ENCODE measurements at regions of chr2 and their contacts with region 1.

Region 1: DNA sequence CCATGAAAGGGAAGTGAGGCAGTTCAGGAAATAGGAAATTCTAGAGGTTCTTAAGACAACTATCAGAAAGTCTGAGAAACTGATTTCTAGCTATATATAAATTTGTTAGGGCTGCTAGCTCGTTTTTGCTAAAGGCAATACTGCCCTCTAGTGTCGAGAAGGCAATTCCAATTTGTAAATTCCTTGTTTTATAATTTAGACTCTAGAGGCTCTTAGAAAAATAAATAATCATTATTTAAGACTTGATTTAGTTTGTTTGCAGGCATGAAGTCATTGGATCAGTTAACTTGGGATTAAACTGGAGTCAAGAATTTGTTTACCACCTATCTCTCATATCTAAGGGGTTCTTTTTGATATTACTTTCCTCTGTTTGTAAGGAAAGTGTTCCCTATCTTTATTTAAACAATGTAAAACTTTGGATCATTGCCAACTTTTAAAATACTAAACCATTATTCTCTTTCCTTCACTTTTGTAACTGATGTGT is 66.2 kb downstream of the ACVR2A start:
- DNase-seq: peak in 1 of 2 experiments; percentile 58
- H3K4me3 ChIP-seq: no peak overlapping the region
- H3K4me3 Mint-ChIP-seq: no peak overlapping the region
- H3K27ac Mint-ChIP-seq: no peak overlapping the region
- H3K4me1 ChIP-seq: no peaks in the 10 kb centered on the region
- H3K4me1 Mint-ChIP-seq: no peaks in the 10 kb centered on the region
- H3K27me3 ChIP-seq: no peaks in the 10 kb centered on the region
- H3K27me3 Mint-ChIP-seq: no peaks in the 10 kb centered on the region
- CTCF ChIP-seq: peak; percentile 61 to 80

Region 2: DNA sequence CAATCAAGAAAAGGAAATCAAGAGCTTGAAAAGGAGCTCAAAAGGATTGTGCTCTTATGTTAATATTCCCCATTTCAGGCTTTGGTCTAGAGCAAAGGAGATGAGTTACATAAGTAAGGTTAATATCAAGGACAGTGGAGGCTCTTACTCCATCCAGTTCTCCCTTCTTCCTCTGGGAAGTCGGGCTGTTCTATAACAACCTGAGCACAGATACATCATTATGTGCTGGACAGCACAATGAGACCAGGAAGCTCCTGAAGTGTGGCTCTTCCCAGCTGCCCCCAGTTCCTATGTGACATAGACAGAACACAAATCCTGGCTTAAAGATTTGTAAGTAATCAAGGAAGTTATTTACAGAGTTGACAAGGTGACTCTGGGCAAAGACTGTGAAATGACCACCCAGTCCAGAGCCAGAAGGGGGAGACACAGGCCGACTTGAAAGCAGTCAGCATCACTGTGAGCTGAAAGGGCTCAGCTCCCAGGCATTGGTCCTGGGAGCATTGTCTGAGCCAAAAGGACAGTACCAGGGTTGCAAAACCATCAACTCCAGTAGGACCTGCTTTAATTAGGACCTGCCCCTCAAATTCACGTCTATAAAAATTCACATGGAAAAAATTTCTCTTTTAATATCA is 983.8 kb before region 1 on chr2:
- CTCF ChIA-PET with region 1: interaction called, 11 read pairs
- POLR2A ChIA-PET with region 1: no interaction called
- intact Hi-C with region 1: loop called (anchors 1 kb)
- DNase-seq: peak; percentile 59 to 66
- H3K4me3 ChIP-seq: no peak overlapping the region
- H3K4me3 Mint-ChIP-seq: no peak overlapping the region
- H3K27ac Mint-ChIP-seq: no peak overlapping the region
- H3K4me1 ChIP-seq: no peaks in the 10 kb centered on the region
- H3K4me1 Mint-ChIP-seq: no peaks in the 10 kb centered on the region
- H3K27me3 ChIP-seq: no peaks in the 10 kb centered on the region
- H3K27me3 Mint-ChIP-seq: no peaks in the 10 kb centered on the region
- CTCF ChIP-seq: peak; percentile 67 to 72

Region 3: GRCh38 chr2:147082850-147083522 is 828.0 kb before region 1 on chr2:
- CTCF ChIA-PET with region 1: interaction called, 12 read pairs
- POLR2A ChIA-PET with region 1: no interaction called
- intact Hi-C with region 1: loop called (anchors 1 kb)
- DNase-seq: peak; percentile 65 to 80
- H3K4me3 ChIP-seq: no peak overlapping the region
- H3K4me3 Mint-ChIP-seq: no peak overlapping the region
- H3K27ac Mint-ChIP-seq: no peak overlapping the region
- H3K4me1 ChIP-seq: no peaks in the 10 kb centered on the region; the same call in 1 of the 2 replicates
- H3K4me1 Mint-ChIP-seq: peaks cover 12% of the 10 kb centered on the region
- H3K27me3 ChIP-seq: no peaks in the 10 kb centered on the region
- H3K27me3 Mint-ChIP-seq: no peaks in the 10 kb centered on the region
- CTCF ChIP-seq: peak; percentile 86 to 90

Region 4: GRCh38 chr2:147288131-147288530 is 622.9 kb before region 1 on chr2:
- CTCF ChIA-PET with region 1: no interaction called
- POLR2A ChIA-PET with region 1: no interaction called
- intact Hi-C with region 1: no loop called
- DNase-seq: no peak
- H3K4me3 ChIP-seq: no peak overlapping the region
- H3K4me3 Mint-ChIP-seq: no peak overlapping the region
- H3K27ac Mint-ChIP-seq: no peak overlapping the region
- H3K4me1 ChIP-seq: no peaks in the 10 kb centered on the region
- H3K4me1 Mint-ChIP-seq: no peaks in the 10 kb centered on the region
- H3K27me3 ChIP-seq: no peaks in the 10 kb centered on the region
- H3K27me3 Mint-ChIP-seq: no peaks in the 10 kb centered on the region
- CTCF ChIP-seq: no peak

Region 5: DNA sequence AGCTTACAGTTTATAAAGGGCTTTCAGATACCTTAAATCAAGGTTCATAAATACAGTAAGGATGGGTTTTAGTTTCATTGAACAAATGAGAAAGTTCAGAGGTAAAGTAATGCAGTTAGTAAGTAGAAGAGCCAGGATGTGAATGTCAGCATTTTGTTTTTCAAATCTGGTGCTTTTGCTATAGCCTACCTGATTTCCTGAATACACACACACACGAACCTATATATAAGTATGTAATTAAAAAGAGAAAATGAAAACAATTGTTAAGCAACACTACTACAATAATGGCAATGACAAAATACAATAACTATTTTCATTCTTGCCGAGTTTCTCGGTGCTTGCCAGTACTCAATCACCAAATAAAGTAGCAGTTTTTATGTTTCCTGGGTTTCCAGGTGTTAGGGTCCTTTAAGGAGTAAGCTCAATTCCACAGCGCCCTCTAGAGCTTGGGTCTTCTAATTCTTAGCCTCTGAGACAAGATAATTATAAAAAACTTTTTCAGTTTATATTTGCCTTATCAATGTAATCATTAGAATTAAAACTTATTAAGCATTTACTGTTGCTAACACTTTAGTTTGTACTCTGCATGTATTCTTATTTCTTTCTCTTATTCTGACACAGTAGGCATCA is 579.1 kb before region 1 on chr2:
- CTCF ChIA-PET with region 1: interaction called, 4 read pairs
- POLR2A ChIA-PET with region 1: no interaction called
- intact Hi-C with region 1: loop called (anchors 2 kb)
- DNase-seq: peak in 1 of 2 experiments; percentile 44
- H3K4me3 ChIP-seq: no peak overlapping the region
- H3K4me3 Mint-ChIP-seq: no peak overlapping the region
- H3K27ac Mint-ChIP-seq: no peak overlapping the region
- H3K4me1 ChIP-seq: no peaks in the 10 kb centered on the region; the same call in 1 of the 2 replicates
- H3K4me1 Mint-ChIP-seq: no peaks in the 10 kb centered on the region
- H3K27me3 ChIP-seq: no peaks in the 10 kb centered on the region
- H3K27me3 Mint-ChIP-seq: no peaks in the 10 kb centered on the region
- CTCF ChIP-seq: peak; percentile 47 to 51

Measured in Caco-2 (cell line).